ENCODE measurements at regions of chr1 and their contacts with region 1.

Region 1: DNA sequence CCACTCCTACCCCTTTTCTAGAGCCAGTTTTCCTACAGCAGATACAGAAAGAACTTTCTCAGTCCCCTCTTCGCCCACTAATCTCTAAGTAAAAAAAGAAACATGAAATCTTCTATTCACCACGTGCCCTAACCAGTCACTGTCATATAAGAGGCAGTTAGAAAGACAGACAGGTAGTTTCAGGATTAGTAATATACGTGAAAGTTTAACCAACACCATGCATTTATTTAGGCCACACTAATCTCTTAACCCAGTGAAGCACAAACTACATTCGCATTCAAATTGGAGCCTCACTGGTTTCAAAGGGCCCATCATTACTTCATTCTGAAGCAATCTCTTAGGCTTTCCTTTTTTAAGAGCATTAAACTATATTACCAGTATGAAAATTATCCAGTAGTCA is 10.1 kb downstream of the GPATCH2 start:
- DNase-seq: peak; percentile 72
- CTCF ChIP-seq: no peak

Region 2: DNA sequence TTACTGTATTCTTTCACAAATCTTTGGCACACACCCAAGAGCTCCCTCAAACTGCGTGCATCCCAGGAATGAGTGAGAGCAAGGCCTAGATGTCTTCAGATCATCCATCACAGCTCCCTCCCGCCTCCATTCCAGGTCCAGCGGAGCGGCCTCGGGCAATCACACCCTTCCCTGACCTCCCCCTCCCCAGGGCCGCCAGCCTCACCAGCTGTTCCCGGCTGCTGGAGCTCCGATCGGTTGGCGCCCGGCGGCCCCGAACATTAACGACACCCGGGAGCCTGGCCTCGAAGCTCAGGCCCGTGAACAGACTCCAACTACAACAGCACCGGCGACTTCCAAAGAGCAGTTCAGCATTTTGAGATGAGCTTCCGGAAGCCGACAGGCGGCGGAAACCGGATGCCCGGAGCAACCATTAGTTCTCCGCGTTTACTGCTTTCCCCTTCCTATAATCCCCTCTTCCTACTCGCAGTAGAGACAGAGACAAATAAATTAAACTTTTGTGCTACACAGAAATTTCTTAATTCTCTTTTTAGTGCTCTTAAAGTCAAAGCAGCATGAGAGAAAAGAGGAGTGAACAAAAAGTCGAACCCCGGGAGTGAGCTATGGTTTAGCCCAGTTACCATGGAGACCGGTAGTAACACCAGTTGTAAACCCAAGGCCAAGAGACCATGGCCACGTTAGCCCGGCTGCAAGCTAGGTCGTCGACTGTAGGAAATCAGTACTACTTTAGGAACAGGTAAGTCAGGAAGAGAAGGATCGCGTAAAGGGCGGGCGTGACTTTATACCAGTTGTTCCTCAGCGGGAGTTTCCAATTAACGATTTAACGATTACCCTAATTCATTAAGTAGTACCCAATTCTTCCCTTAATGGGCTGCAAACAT is 10.1 kb after region 1 on chr1 and contains the starts of genes GPATCH2 and SPATA17:
- CTCF ChIA-PET with region 1: interaction called, 15 read pairs
- POLR2A ChIA-PET with region 1: interaction called, 8 read pairs
- DNase-seq: peak; percentile 83
- CTCF ChIP-seq: no peak